AG04450 (cell line): ENCODE measurements at regions of chr5 and their contacts with region 1.

Region 1: GRCh38 chr5:172188033-172188892 is at the start of gene STK10:
- DNase-seq: peak; percentile 67
- H3K4me3 ChIP-seq: peak within 1 kb of the TSS; percentile 93
- H3K27ac ChIP-seq: peak within 1 kb of the TSS; percentile 77
- H3K27me3 ChIP-seq: no peaks in the 10 kb centered on the region
- CTCF ChIP-seq: peak; percentile 81
- polyA plus RNA-seq, gene STK10: 7.8 and 10.8 TPM in 2 replicates

Region 2: DNA sequence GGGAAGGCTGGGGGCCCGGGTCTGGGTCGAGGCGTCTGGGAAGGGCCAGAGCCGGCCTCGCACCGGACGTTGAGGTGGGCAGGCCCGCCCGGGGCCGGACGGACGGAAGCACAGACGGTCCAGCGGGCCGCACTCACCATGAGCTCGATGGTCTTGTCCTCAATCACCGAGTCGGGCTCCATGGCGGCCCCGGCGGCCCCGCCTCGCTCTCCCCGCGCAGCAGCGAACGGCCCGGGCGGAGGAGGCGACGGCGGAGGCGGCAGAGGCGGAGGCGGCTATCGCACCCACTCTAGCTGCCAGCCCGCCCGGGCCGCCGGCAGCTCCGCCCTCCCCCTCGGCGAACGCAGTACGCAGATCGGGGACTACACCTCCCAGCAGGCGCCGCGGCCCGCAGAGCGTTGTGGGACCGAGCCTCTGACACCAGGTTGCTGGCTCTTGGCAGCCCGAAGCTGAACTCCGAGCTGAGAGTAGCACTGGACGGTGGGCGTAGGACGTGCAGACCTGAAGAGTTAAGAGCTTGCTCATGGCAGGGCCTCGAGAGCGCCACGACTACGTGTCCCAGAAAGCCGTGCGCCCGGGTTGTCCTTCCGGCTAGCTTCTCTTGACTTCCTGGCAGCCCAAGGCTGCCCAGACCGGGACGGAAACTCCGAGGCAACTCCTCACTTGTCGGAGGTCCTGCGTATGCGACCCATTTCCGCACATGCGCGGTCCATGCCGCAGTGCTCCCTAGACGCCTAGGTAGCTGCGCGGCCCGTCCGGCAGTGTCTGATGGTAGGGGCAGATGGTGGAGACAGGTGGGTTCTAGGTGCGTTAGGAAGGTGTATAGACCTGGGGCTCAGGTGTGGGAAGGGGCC is 181.7 kb before region 1 on chr5 and contains the start of gene FBXW11:
- CTCF ChIA-PET with region 1: interaction called, 15 read pairs
- POLR2A ChIA-PET with region 1: interaction called, 7 read pairs
- DNase-seq: peak; percentile 92
- H3K4me3 ChIP-seq: peak within 1 kb of the TSS; percentile 95
- H3K27ac ChIP-seq: peak within 1 kb of the TSS; percentile 99
- H3K27me3 ChIP-seq: no peaks in the 10 kb centered on the region
- CTCF ChIP-seq: no peak
- polyA plus RNA-seq, gene FBXW11: 68.1 and 77.1 TPM in 2 replicates

Region 3: GRCh38 chr5:172106511-172107356 is 81.5 kb before region 1 on chr5:
- CTCF ChIA-PET with region 1: interaction called, 35 read pairs
- POLR2A ChIA-PET with region 1: interaction called, 20 read pairs
- DNase-seq: no peak
- H3K4me3 ChIP-seq: peak overlapping the region; percentile 21; the same call in 1 of the 2 replicates
- H3K27ac ChIP-seq: peak overlapping the region; percentile 68
- H3K27me3 ChIP-seq: no peaks in the 10 kb centered on the region
- CTCF ChIP-seq: peak; percentile 90

Region 4: DNA sequence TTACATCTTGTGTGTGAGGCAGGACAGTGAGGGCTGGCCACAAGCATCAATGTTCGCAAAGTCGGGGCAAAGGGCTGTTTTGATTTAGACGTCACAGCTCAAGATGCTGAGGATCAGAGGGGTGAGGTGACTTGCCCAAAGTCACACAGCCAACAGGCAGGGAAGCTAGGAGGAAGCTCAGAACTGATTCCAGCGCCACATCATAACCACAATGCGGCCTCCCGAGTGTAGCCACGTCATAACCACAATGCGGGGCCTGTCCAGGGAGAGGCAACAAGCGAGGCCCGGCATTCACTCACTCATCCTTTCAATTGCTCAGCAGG is 14.5 kb before region 1 on chr5:
- CTCF ChIA-PET with region 1: interaction called, 17 read pairs
- POLR2A ChIA-PET with region 1: interaction called, 5 read pairs
- DNase-seq: no peak
- H3K4me3 ChIP-seq: no peak overlapping the region
- H3K27ac ChIP-seq: no peak overlapping the region
- H3K27me3 ChIP-seq: no peaks in the 10 kb centered on the region
- CTCF ChIP-seq: no peak

Region 5: GRCh38 chr5:172207511-172207910 is 19.2 kb after region 1 on chr5:
- CTCF ChIA-PET with region 1: interaction called, 17 read pairs
- POLR2A ChIA-PET with region 1: no interaction called
- DNase-seq: no peak
- H3K4me3 ChIP-seq: no peak overlapping the region
- H3K27ac ChIP-seq: no peak overlapping the region
- H3K27me3 ChIP-seq: no peaks in the 10 kb centered on the region
- CTCF ChIP-seq: no peak

Region 6: GRCh38 chr5:172266676-172267092 is 78.4 kb after region 1 on chr5:
- CTCF ChIA-PET with region 1: interaction called, 12 read pairs
- POLR2A ChIA-PET with region 1: no interaction called
- DNase-seq: no peak
- H3K4me3 ChIP-seq: no peak overlapping the region
- H3K27ac ChIP-seq: no peak overlapping the region
- H3K27me3 ChIP-seq: no peaks in the 10 kb centered on the region
- CTCF ChIP-seq: no peak

Region 7: DNA sequence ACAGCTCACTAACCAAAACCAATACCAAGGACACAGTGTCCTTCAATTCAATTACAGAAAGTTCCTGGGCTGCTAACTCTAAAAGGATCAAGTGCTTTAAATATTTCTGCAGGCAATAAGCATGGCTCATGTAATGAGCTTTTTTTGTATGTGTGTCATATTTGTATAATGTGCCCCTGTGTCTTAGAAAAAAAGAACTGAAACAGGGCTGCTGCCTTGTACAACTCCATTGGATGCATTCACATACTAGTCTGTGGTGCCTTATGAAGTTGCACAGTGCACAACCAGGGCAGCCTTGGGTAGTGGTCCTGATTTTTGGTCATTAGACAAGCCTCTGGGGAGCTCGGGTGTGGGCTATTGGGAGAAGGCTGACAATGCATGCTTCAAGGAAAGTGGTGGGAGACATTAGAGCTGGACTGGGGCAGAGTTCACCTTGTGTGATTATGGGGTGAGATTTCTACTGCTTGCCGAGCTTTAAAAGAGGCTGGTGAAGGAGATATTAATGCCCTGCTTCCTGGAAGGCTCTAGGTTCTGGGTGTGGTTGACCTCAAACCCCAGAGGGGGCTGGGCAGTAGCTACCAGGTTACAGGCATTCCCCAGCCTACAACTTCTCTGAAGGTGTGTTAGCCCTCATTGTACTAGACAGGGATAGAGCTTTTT is 1696.3 kb after region 1 on chr5:
- CTCF ChIA-PET with region 1: no interaction called
- POLR2A ChIA-PET with region 1: no interaction called
- DNase-seq: no peak
- H3K4me3 ChIP-seq: no peak overlapping the region
- H3K27ac ChIP-seq: no peak overlapping the region
- H3K27me3 ChIP-seq: no peaks in the 10 kb centered on the region
- CTCF ChIP-seq: no peak